Activated naive CD4-positive, alpha-beta T cell treated with anti-CD3 and anti-CD28 coated beads, Interleukin-2, amount 10 ng/mL, durations not matched to agents 7 days and 5 days (primary cell): ENCODE measurements at regions of chr7 and their contacts with region 1.

Region 1: GRCh38 chr7:30062591-30062990 is 34.4 kb downstream of the PLEKHA8 start:
- DNase-seq: no peak
- H3K4me3 Mint-ChIP-seq: no peak overlapping the region
- H3K27ac Mint-ChIP-seq: no peak overlapping the region
- H3K4me1 Mint-ChIP-seq: no peaks in the 10 kb centered on the region
- H3K27me3 Mint-ChIP-seq: no peaks in the 10 kb centered on the region

Region 2: DNA sequence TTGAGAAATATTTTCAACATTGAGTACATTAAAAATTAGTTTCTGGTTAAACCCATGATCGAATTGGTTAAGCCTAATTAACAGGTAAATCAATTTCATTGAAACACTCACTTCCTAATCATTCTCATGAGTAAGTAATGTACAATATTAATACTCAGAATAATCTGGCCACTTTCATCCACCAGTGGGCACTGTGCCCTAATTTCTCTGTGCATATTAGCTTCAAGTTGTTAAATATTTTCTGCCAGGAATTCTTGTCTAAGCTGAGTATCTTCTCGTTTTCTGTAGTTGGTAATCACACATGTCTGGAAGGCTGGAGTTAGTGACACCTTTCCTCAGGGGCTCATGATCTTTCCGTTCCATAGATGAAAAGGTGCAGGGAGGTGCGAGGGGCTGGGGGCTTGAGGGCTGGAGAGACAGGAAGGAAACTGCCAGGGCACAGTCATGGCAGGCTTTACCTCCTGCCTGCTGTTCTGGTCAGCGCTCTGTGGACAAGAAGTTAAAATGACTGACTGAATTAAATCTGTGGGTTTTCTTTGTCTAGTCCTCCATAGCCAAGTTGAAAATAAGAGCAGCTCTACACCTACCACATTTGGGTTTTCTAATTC is 184.4 kb before region 1 on chr7:
- CTCF ChIA-PET with region 1: interaction called, 10 read pairs
- DNase-seq: peak; percentile 45
- H3K4me3 Mint-ChIP-seq: no peak overlapping the region
- H3K27ac Mint-ChIP-seq: no peak overlapping the region
- H3K4me1 Mint-ChIP-seq: no peaks in the 10 kb centered on the region
- H3K27me3 Mint-ChIP-seq: peaks cover 34% of the 10 kb centered on the region

Region 3: GRCh38 chr7:29921404-29922010 is 141.1 kb before region 1 on chr7:
- CTCF ChIA-PET with region 1: interaction called, 13 read pairs
- DNase-seq: peak; percentile 48
- H3K4me3 Mint-ChIP-seq: no peak overlapping the region
- H3K27ac Mint-ChIP-seq: no peak overlapping the region
- H3K4me1 Mint-ChIP-seq: no peaks in the 10 kb centered on the region
- H3K27me3 Mint-ChIP-seq: no peaks in the 10 kb centered on the region

Region 4: GRCh38 chr7:30028193-30028748 is 34.3 kb before region 1 on chr7 and contains the start of gene PLEKHA8:
- CTCF ChIA-PET with region 1: interaction called, 12 read pairs
- DNase-seq: peak; percentile 89
- H3K4me3 Mint-ChIP-seq: peak within 1 kb of the TSS; percentile 90
- H3K27ac Mint-ChIP-seq: peak within 1 kb of the TSS; percentile 87
- H3K4me1 Mint-ChIP-seq: peaks cover 31% of the 10 kb centered on the region
- H3K27me3 Mint-ChIP-seq: peaks cover 4% of the 10 kb centered on the region

Region 5: GRCh38 chr7:30074422-30075030 is 11.9 kb after region 1 on chr7:
- CTCF ChIA-PET with region 1: interaction called, 17 read pairs
- DNase-seq: no peak
- H3K4me3 Mint-ChIP-seq: no peak overlapping the region
- H3K27ac Mint-ChIP-seq: no peak overlapping the region
- H3K4me1 Mint-ChIP-seq: no peaks in the 10 kb centered on the region
- H3K27me3 Mint-ChIP-seq: no peaks in the 10 kb centered on the region